Motor neuron (in vitro differentiated cells): ENCODE measurements at regions of chr4 and their contacts with region 1.

Region 1: GRCh38 chr4:48546336-48546735 is 56.3 kb downstream of the ZAR1 start:
- ATAC-seq: peak in 1 of 8 experiments; percentile 29
- H3K4me3 ChIP-seq: no peak overlapping the region
- H3K27ac ChIP-seq: no peak overlapping the region
- H3K4me1 ChIP-seq: no peaks in the 10 kb centered on the region

Region 2: DNA sequence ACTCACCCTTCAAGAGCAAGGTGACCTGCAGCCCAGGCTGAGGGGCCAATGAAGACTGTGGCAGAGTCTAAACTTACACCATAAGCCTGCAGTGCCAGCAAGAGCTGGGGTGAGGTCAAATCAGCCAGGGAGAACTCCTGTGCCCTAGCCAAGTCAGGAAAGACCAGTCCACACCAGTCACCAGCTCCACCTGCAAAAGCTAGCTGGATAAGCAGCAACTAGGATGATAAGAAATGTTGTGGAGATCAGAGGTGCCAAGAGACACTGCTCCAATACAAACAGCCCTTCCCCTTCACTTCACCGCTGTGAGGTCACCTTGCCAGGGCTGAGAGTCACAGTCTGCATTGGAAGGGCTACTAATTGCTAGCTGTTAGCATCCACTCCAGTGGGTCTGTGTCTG is 498.4 kb before region 1 on chr4:
- in situ Hi-C with region 1: no loop called
- ATAC-seq: no peak
- H3K4me3 ChIP-seq: no peak overlapping the region
- H3K27ac ChIP-seq: no peak overlapping the region
- H3K4me1 ChIP-seq: no peaks in the 10 kb centered on the region

Region 3: DNA sequence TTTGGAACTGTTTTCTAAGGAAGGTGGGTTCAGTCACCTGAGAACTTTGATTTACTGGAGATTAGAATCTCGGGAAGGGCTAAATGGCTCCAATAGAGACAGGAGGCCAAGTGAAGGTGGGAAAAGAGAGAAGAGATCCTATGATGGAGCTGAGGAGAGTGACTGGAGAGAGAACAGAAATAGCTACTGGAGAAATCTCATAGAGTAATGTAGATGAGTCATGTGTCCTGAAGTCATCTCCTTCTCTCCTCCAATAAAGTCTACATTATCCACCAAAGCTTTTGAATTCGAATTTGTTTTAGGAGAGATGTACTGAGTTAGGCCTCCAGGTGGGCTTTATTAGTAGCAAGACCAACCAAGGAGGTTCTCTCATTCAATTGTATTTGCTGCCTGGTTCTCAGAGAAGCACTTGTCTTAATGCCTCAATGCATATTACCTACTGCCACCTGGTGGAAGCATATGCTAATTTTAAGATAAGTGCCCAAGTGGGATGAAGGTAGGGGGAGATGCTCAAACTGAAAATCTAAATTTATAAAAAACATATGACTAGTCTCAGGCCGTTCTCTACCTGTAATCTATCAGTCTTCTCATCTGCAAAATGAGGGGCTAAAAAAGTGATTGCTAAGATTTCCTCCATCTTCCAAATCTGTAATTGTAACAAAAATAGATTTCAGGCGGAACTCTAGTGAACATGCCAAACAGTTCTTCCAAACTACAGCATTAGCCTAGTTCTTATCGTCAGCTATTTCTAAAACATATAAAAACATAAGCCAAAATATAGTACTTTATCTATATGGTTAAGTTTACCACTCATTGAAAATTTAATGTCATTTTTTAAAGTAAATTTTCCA is 436.7 kb before region 1 on chr4:
- in situ Hi-C with region 1: loop called in 1 of 9 experiments (anchors 25 kb)
- ATAC-seq: peak in 2 of 8 experiments; percentile 38 to 71
- H3K4me3 ChIP-seq: no peak overlapping the region
- H3K27ac ChIP-seq: no peak overlapping the region
- H3K4me1 ChIP-seq: peaks cover 0 to 4% of the 10 kb centered on the region in 2 donors

Region 4: GRCh38 chr4:48315728-48316630 is 230.4 kb before region 1 on chr4:
- in situ Hi-C with region 1: loop called in 1 of 9 experiments (anchors 10 kb)
- ATAC-seq: peak in 3 of 8 experiments; percentile 82 to 90 (median 87)
- H3K4me3 ChIP-seq: no peak overlapping the region
- H3K27ac ChIP-seq: no peak overlapping the region
- H3K4me1 ChIP-seq: peaks cover 0 to 2% of the 10 kb centered on the region in 2 donors

Region 5: DNA sequence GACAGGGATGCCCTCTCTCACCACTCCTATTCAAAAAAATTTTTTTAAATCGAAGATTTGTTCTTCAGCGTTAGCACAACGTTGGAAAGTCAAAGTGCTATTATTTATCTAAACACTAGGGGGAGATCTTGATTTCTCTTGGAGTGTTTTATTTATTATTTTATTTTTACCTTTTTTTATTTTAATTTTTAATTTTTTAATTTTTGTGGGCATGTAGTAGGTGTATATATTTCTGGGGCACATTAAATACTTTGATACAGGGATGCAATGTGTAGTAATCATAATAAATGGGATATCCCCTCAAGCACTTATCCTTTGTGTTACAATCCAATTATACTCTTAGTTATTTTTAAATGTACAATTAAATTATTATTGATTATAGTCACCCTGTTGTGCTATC is 100.6 kb before region 1 on chr4:
- in situ Hi-C with region 1: loop called in 2 of 9 experiments (anchors 10 to 25 kb)
- ATAC-seq: no peak
- H3K4me3 ChIP-seq: no peak overlapping the region
- H3K27ac ChIP-seq: no peak overlapping the region
- H3K4me1 ChIP-seq: no peaks in the 10 kb centered on the region

Region 6: GRCh38 chr4:48827622-48828021 is 281.3 kb after region 1 on chr4:
- in situ Hi-C with region 1: no loop called
- ATAC-seq: no peak
- H3K4me3 ChIP-seq: no peak overlapping the region
- H3K27ac ChIP-seq: no peak overlapping the region
- H3K4me1 ChIP-seq: peaks cover 2 to 9% of the 10 kb centered on the region in 2 donors